Activated CD4-positive, alpha-beta T cell treated with anti-CD3 and anti-CD28 coated beads for 36 hours (primary cell): ENCODE measurements at regions of chr19 and their contacts with region 1.

Region 1: DNA sequence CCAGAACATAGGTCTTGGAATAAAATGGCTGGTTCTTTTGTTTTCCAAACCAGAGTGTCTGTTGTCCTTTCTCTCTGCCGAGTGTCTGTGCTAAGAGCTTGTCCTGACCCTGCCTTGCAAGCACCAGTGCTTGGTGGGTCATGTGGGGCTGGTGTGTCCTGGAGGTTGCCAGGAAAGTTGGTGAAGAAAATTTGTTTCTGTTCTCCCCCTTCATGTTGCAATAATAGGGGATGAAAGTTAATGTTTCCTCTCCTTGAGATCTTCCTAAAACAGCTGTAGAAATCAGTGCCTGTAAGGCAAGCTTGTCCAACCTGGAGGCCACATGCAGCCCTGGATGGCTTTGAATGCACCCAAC is 2.7 kb downstream of the HAMP start:
- DNase-seq: no peak
- ATAC-seq: no peak
- H3K4me3 Mint-ChIP-seq: no peak overlapping the region
- H3K27ac Mint-ChIP-seq: no peak overlapping the region
- H3K4me1 Mint-ChIP-seq: peaks cover 4% of the 10 kb centered on the region
- H3K27me3 Mint-ChIP-seq: peaks cover 22% of the 10 kb centered on the region

Region 2: DNA sequence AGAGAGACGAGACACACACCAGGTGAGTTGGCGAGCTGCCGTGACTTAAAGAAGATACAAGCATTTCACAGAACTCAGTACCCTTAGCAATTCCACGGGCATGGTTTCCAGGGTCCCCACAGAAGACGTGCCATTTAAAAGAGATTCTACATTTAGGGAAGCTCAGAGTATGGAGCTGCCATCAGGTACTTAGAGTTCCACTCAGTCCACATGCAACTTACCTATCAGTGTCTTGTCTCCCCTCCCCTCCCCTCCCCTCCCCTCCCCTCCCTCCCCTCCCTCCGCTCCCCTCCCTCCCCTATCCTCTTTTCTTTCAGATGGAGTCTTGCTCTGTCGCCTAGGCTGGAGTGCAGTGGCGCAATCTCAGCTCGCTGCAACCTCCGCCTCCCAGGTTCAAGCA is 346.2 kb before region 1 on chr19:
- CTCF ChIA-PET with region 1: no interaction called
- POLR2A ChIA-PET with region 1: no interaction called
- intact Hi-C with region 1: no loop called
- DNase-seq: no peak
- ATAC-seq: no peak
- H3K4me3 Mint-ChIP-seq: no peak overlapping the region
- H3K27ac Mint-ChIP-seq: no peak overlapping the region
- H3K4me1 Mint-ChIP-seq: no peaks in the 10 kb centered on the region
- H3K27me3 Mint-ChIP-seq: no peaks in the 10 kb centered on the region

Region 3: GRCh38 chr19:35264268-35265125 is 20.6 kb before region 1 on chr19:
- CTCF ChIA-PET with region 1: interaction called, 3 read pairs
- POLR2A ChIA-PET with region 1: interaction called, 12 read pairs
- intact Hi-C with region 1: no loop called
- DNase-seq: peak; percentile 5
- ATAC-seq: no peak
- H3K4me3 Mint-ChIP-seq: no peak overlapping the region
- H3K27ac Mint-ChIP-seq: no peak overlapping the region
- H3K4me1 Mint-ChIP-seq: peaks cover 18% of the 10 kb centered on the region
- H3K27me3 Mint-ChIP-seq: no peaks in the 10 kb centered on the region